GM10248 (cell line): ENCODE measurements at regions of chr7 and their contacts with region 1.

Region 1: GRCh38 chr7:144127703-144128334 is 4.8 kb downstream of the OR2A14 start:
- DNase-seq: peak; percentile 81
- CTCF ChIP-seq: peak; percentile 86

Region 2: DNA sequence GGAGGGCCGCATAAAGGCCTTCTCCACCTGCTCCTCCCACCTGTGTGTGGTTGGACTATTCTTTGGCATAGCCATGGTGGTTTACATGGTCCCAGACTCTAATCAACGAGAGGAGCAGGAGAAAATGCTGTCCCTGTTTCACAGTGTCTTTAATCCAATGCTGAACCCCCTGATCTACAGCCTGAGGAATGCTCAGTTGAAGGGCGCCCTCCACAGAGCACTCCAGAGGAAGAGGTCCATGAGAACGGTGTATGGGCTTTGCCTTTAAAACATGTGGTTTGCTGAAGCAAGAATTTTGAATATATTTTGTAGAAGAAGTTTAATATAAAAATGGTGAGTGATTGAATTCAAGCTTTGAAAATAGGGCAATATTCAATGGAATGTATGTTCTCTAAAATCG is 17.5 kb before region 1 on chr7:
- CTCF ChIA-PET with region 1: interaction called, 10 read pairs
- POLR2A ChIA-PET with region 1: no interaction called
- DNase-seq: no peak
- CTCF ChIP-seq: no peak